Gastrocnemius medialis (tissue), 4 donors: ENCODE measurements at regions of chr21 and their contacts with region 1.

Region 1: DNA sequence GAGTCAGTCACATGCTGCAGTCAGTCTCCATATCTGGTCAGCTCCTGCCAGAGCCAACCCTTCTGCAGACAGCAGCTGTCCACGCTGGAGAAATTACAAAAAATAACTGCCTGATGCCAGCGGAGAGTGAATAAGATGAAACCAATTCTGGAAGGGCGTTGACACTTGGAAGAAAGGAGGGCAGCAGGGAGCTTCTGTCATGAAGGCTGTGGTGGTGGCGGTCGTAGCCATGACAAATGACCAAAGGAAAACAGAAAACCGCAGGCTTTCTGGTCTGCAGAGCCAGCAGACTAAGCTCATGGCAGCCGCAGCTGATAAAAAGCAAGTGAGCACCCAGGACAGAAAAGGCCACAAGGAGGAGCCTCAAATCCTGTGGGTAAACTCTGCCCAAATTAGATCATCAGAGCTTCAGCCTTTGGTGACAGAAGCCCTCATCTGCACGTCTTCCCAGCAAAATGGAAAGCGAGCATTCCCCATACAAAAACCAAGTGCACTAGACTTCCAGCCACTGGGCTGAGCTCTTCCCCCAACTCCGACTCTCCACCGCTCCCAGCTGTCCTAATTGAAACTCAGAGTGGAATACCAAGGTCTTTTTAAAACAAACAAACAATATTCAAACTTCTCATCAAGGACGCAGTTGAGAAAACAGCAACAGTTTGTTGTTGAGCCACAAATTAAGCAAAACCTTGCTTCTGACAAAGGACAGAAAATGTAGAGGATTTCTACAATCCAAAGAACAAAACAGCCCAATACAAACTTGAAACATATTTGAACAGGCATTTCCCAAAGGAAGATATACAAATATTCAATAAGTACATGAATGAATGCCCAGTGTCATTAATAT is 28.7 kb downstream of the RSPH1 start:
- DNase-seq: peak in 1 of 2 donors; percentile 25
- ATAC-seq: peak; percentile 78 to 85
- H3K4me3 ChIP-seq: peak overlapping the region in 2 of 4 donors; percentile 14 to 42
- H3K27ac ChIP-seq: peak overlapping the region in 3 of 4 donors; percentile 19 to 49 (median 28)
- H3K4me1 ChIP-seq: peaks cover 9 to 12% of the 10 kb centered on the region in 2 donors
- H3K27me3 ChIP-seq: no peaks in the 10 kb centered on the region
- CTCF ChIP-seq: peak in 4 of 5 experiments; percentile 26 to 46 (median 32)
- POLR2A ChIP-seq: no peak

Region 2: GRCh38 chr21:42513985-42514882 is 46.9 kb after region 1 on chr21:
- in situ Hi-C with region 1: no loop called
- intact Hi-C with region 1: loop called (anchors 2 kb)
- DNase-seq: peak in 1 of 2 donors; percentile 45
- ATAC-seq: peak; percentile 50 to 61
- H3K4me3 ChIP-seq: peak overlapping the region; percentile 59 to 91 (median 78)
- H3K27ac ChIP-seq: peak overlapping the region; percentile 79 to 89 (median 82)
- H3K4me1 ChIP-seq: peaks cover 10 to 13% of the 10 kb centered on the region in 2 donors
- H3K27me3 ChIP-seq: no peaks in the 10 kb centered on the region
- CTCF ChIP-seq: no peak
- POLR2A ChIP-seq: peak; percentile 44 to 53

Region 3: GRCh38 chr21:42561762-42562650 is 94.6 kb after region 1 on chr21:
- in situ Hi-C with region 1: loop called in 2 of 4 experiments (anchors 25 kb)
- intact Hi-C with region 1: no loop called
- DNase-seq: no peak
- ATAC-seq: peak in 1 of 2 donors; percentile 16
- H3K4me3 ChIP-seq: no peak overlapping the region
- H3K27ac ChIP-seq: no peak overlapping the region
- H3K4me1 ChIP-seq: no peaks in the 10 kb centered on the region
- H3K27me3 ChIP-seq: no peaks in the 10 kb centered on the region
- CTCF ChIP-seq: no peak
- POLR2A ChIP-seq: no peak